Left ventricle myocardium superior (tissue), 1 donor: ENCODE measurements at regions of chr13 and their contacts with region 1.

Region 1: GRCh38 chr13:101757446-101758039 is 305.1 kb downstream of the ITGBL1 start:
- DNase-seq: no peak
- ATAC-seq: peak; percentile 39

Region 2: GRCh38 chr13:101144808-101145419 is 612.6 kb before region 1 on chr13:
- intact Hi-C with region 1: loop called (anchors 10 kb)
- DNase-seq: no peak
- ATAC-seq: no peak

Region 3: GRCh38 chr13:101706651-101707050 is 50.9 kb before region 1 on chr13:
- intact Hi-C with region 1: no loop called
- DNase-seq: no peak
- ATAC-seq: no peak